CD8-positive, alpha-beta T cell (primary cell): ENCODE measurements at regions of chr4 and their contacts with region 1.

Region 1: GRCh38 chr4:65845199-65845773 is 175.0 kb upstream of the EPHA5 start:
- DNase-seq: no peak
- ATAC-seq: no peak
- H3K4me3 ChIP-seq: no peak overlapping the region
- H3K4me3 Mint-ChIP-seq: no peak overlapping the region
- H3K27ac ChIP-seq: no peak overlapping the region
- H3K27ac Mint-ChIP-seq: no peak overlapping the region
- H3K4me1 ChIP-seq: no peaks in the 10 kb centered on the region
- H3K4me1 Mint-ChIP-seq: no peaks in the 10 kb centered on the region
- H3K27me3 ChIP-seq: no peaks in the 10 kb centered on the region
- H3K27me3 Mint-ChIP-seq: no peaks in the 10 kb centered on the region
- CTCF ChIP-seq: no peak

Region 2: DNA sequence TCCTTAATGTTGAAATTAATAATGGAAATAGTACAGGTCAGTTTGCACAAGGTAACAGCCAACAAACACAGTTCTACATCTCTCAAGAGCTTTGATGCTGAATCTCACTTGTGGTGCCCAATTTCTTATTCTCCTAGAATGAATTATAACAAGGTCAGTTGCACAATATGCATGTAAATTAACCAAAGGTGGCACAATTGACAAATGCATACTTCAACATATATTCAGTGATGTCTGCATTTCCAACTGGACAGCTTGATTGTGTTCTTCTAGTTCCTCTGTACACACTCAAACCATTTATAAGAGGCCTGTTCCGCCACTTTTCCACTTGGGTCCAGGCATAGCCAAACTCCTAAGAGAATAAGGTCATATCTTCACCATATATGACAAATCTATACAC is 35.3 kb after region 1 on chr4:
- CTCF ChIA-PET with region 1: no interaction called
- POLR2A ChIA-PET with region 1: no interaction called
- intact Hi-C with region 1: loop called in 1 of 2 experiments (anchors 5 kb)
- DNase-seq: no peak
- ATAC-seq: no peak
- H3K4me3 ChIP-seq: no peak overlapping the region
- H3K4me3 Mint-ChIP-seq: no peak overlapping the region
- H3K27ac ChIP-seq: no peak overlapping the region
- H3K27ac Mint-ChIP-seq: no peak overlapping the region
- H3K4me1 ChIP-seq: no peaks in the 10 kb centered on the region
- H3K4me1 Mint-ChIP-seq: no peaks in the 10 kb centered on the region
- H3K27me3 ChIP-seq: no peaks in the 10 kb centered on the region
- H3K27me3 Mint-ChIP-seq: no peaks in the 10 kb centered on the region
- CTCF ChIP-seq: no peak